Activated CD4-positive, alpha-beta T cell treated with anti-CD3 and anti-CD28 coated beads for 36 hours (primary cell): ENCODE measurements at regions of chr7 and their contacts with region 1.

Region 1: DNA sequence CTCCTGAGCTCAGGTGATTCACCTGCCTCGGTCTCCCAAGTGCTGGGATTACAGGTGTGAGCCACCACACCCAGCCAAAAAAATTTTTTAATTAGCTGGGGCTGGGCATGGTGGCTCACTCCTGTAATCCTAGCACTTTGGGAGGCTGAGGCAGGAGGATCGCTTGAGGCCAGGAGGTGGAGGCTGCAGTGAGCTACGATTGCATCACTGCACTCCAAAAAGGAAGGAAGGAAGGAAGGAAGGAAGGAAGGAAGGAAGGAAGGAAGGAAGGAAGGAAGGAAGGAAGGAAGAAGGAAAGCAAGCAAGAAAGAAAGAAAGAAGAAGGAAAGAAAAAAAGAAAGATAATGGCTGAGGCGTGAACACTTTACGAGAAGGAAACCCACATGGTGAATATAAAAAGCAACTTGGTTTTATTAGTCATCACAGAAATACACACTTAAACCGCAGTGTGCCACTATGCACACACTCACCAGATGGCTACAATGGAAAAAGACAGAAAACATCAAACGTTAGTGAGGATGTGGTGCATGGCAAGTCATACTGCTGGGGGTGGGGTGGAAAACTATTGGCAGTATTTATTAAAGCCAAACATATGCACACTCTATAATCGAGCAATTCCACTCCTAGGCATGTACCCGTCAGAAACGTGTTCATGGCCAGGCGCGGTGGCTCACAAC is 4.4 kb upstream of the CCL26 start:
- DNase-seq: peak; percentile 75
- ATAC-seq: peak; percentile 96
- H3K4me3 Mint-ChIP-seq: no peak overlapping the region
- H3K27ac Mint-ChIP-seq: peak overlapping the region; percentile 77
- H3K4me1 Mint-ChIP-seq: peaks cover 44% of the 10 kb centered on the region
- H3K27me3 Mint-ChIP-seq: peaks cover 17% of the 10 kb centered on the region

Region 2: DNA sequence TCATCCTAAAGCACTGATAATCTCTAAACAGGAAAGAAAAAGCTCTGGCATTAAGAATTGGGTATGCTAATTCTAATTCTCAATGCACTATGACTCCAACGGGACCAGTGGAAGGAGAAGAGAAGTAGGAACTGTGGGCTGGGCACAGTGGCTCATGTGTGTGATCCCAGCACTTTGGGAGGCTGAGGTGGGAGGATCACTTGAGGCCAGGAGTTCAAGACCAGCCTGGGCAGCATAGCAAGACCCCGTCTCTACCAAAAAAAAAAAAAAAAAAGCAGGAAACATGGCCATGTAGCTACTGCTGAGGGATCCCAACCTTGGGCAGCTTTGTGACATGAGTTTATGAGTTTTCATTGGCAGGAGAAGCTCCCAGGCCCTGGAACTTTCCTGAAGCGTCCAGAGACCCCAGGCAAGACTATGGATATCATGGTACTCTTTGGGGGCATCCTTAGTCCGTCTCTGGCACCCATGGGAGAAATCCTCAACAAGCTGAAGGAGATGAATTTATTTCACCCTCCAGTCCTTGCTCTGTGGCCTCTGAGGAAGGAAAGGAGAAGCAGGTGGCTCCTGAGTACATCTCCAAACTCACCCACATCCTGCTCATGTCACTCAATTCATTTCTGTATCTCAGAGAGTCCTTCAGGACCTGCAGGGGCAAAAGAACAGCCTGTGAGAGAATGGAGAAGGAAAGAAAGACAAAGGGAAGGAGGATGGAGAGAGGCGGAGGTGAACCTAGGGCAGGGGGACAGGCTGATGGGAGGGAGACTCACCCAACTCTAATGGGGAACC is 184.8 kb before region 1 on chr7:
- CTCF ChIA-PET with region 1: no interaction called
- POLR2A ChIA-PET with region 1: no interaction called
- intact Hi-C with region 1: loop called (anchors 1 to 5 kb)
- DNase-seq: no peak
- ATAC-seq: no peak
- H3K4me3 Mint-ChIP-seq: no peak overlapping the region
- H3K27ac Mint-ChIP-seq: no peak overlapping the region
- H3K4me1 Mint-ChIP-seq: peaks cover 18% of the 10 kb centered on the region
- H3K27me3 Mint-ChIP-seq: no peaks in the 10 kb centered on the region

Region 3: GRCh38 chr7:75599244-75599781 is 177.1 kb before region 1 on chr7:
- CTCF ChIA-PET with region 1: no interaction called
- POLR2A ChIA-PET with region 1: no interaction called
- intact Hi-C with region 1: loop called (anchors 1 to 5 kb)
- DNase-seq: no peak
- ATAC-seq: no peak
- H3K4me3 Mint-ChIP-seq: no peak overlapping the region
- H3K27ac Mint-ChIP-seq: no peak overlapping the region
- H3K4me1 Mint-ChIP-seq: peaks cover 21% of the 10 kb centered on the region
- H3K27me3 Mint-ChIP-seq: no peaks in the 10 kb centered on the region

Region 4: GRCh38 chr7:75795831-75796285 is 19.4 kb after region 1 on chr7:
- CTCF ChIA-PET with region 1: no interaction called
- POLR2A ChIA-PET with region 1: no interaction called
- intact Hi-C with region 1: no loop called
- DNase-seq: no peak
- ATAC-seq: no peak
- H3K4me3 Mint-ChIP-seq: no peak overlapping the region
- H3K27ac Mint-ChIP-seq: no peak overlapping the region
- H3K4me1 Mint-ChIP-seq: no peaks in the 10 kb centered on the region
- H3K27me3 Mint-ChIP-seq: peaks cover 2% of the 10 kb centered on the region

Region 5: DNA sequence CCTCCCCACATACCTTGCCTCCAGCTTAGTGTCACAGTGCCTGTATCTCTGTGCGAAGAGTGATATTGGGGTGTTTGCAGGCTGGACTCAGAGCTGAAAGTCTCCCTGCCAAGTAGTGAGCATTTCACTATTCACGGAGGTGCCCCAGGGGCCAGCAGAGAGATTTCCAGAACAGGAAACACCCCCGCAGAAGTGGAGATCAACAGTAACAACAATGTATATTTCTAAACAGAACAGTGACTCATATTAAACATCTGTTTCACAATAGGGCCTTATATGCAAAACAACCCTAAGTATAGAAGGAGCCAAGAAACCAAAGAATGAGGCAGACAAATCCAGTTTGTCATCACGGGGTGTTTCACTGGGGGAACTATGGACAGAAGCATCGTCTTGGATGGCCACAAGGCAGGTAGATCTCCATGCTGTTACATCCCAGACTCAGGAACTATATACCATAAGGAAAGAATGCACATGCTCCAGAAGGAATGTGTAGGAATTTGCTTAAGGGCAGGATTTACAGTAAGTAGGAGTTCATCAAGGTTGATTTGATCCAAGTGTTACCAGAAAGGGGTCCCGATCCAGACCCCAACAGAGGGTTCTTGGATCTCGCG is 66.5 kb after region 1 on chr7:
- CTCF ChIA-PET with region 1: no interaction called
- POLR2A ChIA-PET with region 1: no interaction called
- intact Hi-C with region 1: loop called (anchors 1 kb)
- DNase-seq: peak; percentile 74
- ATAC-seq: peak; percentile 95
- H3K4me3 Mint-ChIP-seq: peak overlapping the region; percentile 32
- H3K27ac Mint-ChIP-seq: peak overlapping the region; percentile 87
- H3K4me1 Mint-ChIP-seq: peaks cover 14% of the 10 kb centered on the region
- H3K27me3 Mint-ChIP-seq: no peaks in the 10 kb centered on the region

Region 6: DNA sequence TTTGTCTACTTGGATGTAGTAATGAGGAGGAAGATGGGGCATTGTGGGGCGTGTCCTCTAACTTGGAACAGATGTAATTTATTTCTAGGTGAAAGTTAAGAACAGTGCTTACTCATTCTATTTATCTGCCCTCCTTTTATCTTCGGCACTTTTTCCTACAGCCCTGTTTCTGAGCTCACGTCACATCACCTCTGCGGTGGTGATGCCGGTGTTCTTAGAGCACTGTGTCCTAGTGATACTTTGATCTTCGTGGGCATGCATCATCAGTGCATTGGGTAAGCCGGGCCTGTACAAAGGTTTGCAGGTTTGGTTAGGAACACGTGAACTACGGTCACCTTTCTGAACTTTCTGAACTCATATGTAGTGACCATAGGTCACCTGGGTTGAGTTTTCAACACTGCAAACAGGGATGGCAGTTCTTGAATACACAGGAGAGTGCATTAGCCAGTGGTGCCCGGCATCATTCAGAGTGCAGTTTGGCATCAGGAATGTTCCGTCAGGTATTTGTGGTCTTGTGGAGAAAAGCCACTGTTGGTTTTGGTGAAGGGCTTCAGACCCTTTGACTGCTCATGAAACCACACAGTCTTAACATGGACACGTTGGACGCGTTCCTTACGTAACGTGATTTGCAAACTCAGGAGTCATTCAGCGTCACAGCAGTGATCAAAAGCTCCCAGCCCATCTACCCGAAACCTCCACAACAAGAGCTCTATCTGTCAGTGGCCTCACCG is 144.2 kb after region 1 on chr7:
- CTCF ChIA-PET with region 1: no interaction called
- POLR2A ChIA-PET with region 1: no interaction called
- intact Hi-C with region 1: loop called (anchors 2 to 5 kb)
- DNase-seq: peak; percentile 71
- ATAC-seq: peak; percentile 93
- H3K4me3 Mint-ChIP-seq: no peak overlapping the region
- H3K27ac Mint-ChIP-seq: no peak overlapping the region
- H3K4me1 Mint-ChIP-seq: peaks cover 44% of the 10 kb centered on the region
- H3K27me3 Mint-ChIP-seq: no peaks in the 10 kb centered on the region

Region 7: GRCh38 chr7:76011442-76011861 is 235.0 kb after region 1 on chr7:
- CTCF ChIA-PET with region 1: no interaction called
- POLR2A ChIA-PET with region 1: no interaction called
- intact Hi-C with region 1: loop called (anchors 2 to 5 kb)
- DNase-seq: no peak
- ATAC-seq: no peak
- H3K4me3 Mint-ChIP-seq: no peak overlapping the region
- H3K27ac Mint-ChIP-seq: no peak overlapping the region
- H3K4me1 Mint-ChIP-seq: peaks cover 34% of the 10 kb centered on the region
- H3K27me3 Mint-ChIP-seq: peaks cover 3% of the 10 kb centered on the region